ENCODE measurements at regions of chr1 and their contacts with region 1.

Region 1: DNA sequence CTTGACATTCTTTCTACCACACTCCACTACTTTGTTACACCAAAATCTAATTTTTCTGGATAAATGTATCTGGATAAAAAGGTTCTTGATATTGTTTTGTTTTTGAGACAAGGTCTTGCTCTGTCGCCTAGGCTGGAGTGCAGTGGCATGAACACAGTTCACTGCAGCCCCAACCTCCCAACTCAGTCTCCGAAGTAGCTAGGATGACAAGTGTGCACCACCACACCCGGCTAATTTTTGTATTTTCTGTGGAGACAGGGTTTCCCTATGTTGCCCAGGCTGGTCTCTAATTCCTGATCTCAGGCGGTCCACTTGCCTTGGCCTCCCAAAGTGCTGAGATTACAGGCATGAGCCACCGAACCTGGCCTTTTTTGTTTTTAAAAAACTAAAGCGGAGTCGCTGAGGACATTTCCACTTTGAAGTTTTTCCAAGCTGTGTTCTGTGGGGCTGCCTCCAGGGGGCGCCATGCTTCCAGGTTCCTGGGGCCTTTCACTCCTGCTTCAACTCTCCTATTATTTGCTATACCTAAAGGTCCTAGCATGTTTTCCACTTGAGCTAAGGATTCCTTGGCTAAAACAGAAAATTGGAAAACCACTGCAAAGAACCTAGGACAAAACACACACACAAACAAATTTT is 14.1 kb upstream of the NCMAP start:
- DNase-seq: no peak
- H3K4me3 ChIP-seq: peak overlapping the region; percentile 48; the same call in 1 of the 2 replicates
- H3K27ac ChIP-seq: peak overlapping the region; percentile 83
- H3K4me1 ChIP-seq: peaks cover 41% of the 10 kb centered on the region
- H3K27me3 ChIP-seq: no peaks in the 10 kb centered on the region
- CTCF ChIP-seq: peak; percentile 61

Region 2: GRCh38 chr1:24491577-24492360 is 50.1 kb before region 1 on chr1:
- CTCF ChIA-PET with region 1: no interaction called
- POLR2A ChIA-PET with region 1: no interaction called
- intact Hi-C with region 1: no loop called
- DNase-seq: no peak
- H3K4me3 ChIP-seq: no peak overlapping the region
- H3K27ac ChIP-seq: no peak overlapping the region
- H3K4me1 ChIP-seq: no peaks in the 10 kb centered on the region
- H3K27me3 ChIP-seq: no peaks in the 10 kb centered on the region
- CTCF ChIP-seq: no peak

Region 3: DNA sequence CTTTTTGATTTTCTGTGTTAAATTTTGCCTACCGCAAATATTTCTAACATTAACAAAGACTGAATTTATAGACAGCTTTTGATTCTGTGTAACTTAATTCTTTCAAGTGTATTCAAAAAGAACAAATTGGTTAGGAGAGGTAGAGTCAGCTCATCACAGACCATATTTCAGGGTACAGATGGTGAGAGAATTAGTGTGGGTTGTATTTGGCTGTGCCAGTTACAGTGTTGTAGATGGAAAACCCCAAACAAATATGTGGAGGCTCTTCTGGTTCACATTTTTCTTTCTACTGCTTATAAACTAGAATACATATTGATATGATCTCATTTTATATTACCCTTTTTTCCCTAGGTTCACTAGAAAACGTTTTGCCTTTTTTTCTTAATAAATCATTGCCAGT is 28.1 kb before region 1 on chr1:
- CTCF ChIA-PET with region 1: no interaction called
- POLR2A ChIA-PET with region 1: interaction called, 12 read pairs
- intact Hi-C with region 1: no loop called
- DNase-seq: no peak
- H3K4me3 ChIP-seq: no peak overlapping the region
- H3K27ac ChIP-seq: no peak overlapping the region
- H3K4me1 ChIP-seq: no peaks in the 10 kb centered on the region
- H3K27me3 ChIP-seq: no peaks in the 10 kb centered on the region
- CTCF ChIP-seq: no peak

Region 4: GRCh38 chr1:24567792-24568388 is 26.1 kb after region 1 on chr1:
- CTCF ChIA-PET with region 1: interaction called, 3 read pairs
- POLR2A ChIA-PET with region 1: interaction called, 14 read pairs
- intact Hi-C with region 1: no loop called
- DNase-seq: peak; percentile 71 to 81
- H3K4me3 ChIP-seq: no peak overlapping the region
- H3K27ac ChIP-seq: 0 out of 2 replicates have a peak overlapping the region, but pooled peaks have one; percentile 41
- H3K4me1 ChIP-seq: peaks cover 22% of the 10 kb centered on the region
- H3K27me3 ChIP-seq: no peaks in the 10 kb centered on the region
- CTCF ChIP-seq: no peak; the same call in 1 of the 2 replicates

Region 5: GRCh38 chr1:24586970-24587820 is 45.4 kb after region 1 on chr1:
- CTCF ChIA-PET with region 1: interaction called, 15 read pairs
- POLR2A ChIA-PET with region 1: interaction called, 5 read pairs
- intact Hi-C with region 1: no loop called
- DNase-seq: peak; percentile 29 to 37
- H3K4me3 ChIP-seq: no peak overlapping the region
- H3K27ac ChIP-seq: no peak overlapping the region
- H3K4me1 ChIP-seq: no peaks in the 10 kb centered on the region
- H3K27me3 ChIP-seq: no peaks in the 10 kb centered on the region
- CTCF ChIP-seq: peak; percentile 76

Region 6: DNA sequence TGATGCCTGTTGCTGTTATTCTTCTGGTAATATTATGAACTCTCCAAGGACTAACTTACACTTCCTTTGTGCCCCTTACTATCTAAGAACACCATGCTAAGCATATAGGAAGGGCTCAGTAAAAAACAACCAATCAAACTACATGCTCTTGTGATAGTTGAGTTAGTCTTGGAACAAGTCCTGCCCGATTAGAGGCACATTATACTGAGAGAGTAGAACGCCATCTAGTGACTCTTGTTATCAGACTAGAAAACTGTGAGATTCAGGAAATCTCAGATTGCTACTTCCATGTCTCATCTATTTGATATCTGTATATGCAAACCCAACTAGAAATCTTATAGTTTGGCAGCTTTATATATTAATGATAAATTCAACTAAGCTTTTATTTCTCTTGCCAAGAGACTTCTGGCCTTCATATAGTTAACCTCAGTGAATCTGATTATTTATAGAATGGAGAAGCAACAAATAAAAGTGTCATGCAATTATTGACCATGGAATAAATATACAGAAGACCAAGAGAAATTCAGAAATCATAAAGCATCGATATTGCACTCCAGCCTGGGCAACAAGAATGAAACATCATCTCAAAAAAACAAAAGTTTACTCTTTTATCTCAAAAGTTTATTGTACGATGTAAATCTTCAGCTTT is 93.5 kb after region 1 on chr1:
- CTCF ChIA-PET with region 1: interaction called, 3 read pairs
- POLR2A ChIA-PET with region 1: no interaction called
- intact Hi-C with region 1: loop called (anchors 1 kb)
- DNase-seq: peak in 1 of 2 experiments; percentile 46
- H3K4me3 ChIP-seq: no peak overlapping the region
- H3K27ac ChIP-seq: no peak overlapping the region
- H3K4me1 ChIP-seq: no peaks in the 10 kb centered on the region
- H3K27me3 ChIP-seq: no peaks in the 10 kb centered on the region
- CTCF ChIP-seq: peak; percentile 69

Region 7: DNA sequence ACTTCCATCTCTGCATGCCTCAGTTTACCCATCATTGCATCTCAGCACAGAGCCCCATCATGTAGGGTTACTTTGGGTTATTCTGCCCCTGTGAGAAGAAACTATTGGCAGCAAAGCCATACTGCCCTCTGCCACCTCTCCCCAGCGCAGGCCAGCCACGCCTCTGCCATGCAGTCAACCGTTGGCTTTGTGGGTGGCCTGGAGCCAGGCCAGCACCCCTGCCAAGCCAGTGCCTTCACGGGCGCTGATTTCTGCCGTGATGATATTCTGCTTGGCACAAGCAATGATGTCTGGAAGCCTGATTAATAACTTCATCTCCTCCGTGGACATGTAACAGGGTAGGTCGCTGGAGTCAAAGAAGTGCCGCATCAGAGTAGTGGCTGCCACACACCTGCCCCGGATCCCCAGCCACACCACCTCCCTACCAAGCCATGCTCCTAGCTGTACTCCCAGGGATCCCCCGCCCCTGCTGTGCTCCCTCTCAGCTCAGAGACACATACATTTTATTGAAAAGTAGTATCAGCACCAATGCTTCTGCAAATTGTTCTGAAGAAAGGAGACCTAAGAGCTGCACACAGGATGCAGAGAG is 1677.2 kb after region 1 on chr1:
- CTCF ChIA-PET with region 1: no interaction called
- POLR2A ChIA-PET with region 1: no interaction called
- intact Hi-C with region 1: no loop called
- DNase-seq: peak in 1 of 2 experiments; percentile 34
- H3K4me3 ChIP-seq: no peak overlapping the region
- H3K27ac ChIP-seq: no peak overlapping the region
- H3K4me1 ChIP-seq: no peaks in the 10 kb centered on the region
- H3K27me3 ChIP-seq: no peaks in the 10 kb centered on the region
- CTCF ChIP-seq: no peak

Measured in PC-9 (cell line).